ENCODE measurements at regions of chr6 and their contacts with region 1.

Region 1: DNA sequence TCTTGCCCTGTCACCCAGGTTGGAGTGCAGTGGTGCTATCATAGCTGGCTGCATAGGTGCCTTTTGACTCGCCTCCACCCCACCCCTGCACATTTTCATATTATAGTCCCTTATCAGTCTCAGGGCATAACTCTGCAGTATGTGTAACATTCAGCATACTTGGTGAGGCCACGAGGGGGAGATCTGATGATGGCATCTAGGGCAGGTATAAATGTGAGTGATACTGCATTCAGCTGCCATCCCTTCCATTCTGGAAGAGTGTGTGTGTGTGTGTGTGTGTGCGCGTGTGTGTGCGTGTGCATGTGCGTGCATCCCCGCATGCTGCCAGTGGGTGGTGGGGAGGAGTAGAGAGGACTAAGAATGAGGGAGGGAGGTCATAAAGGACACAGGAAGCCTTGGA is 81.4 kb downstream of the JARID2 start:
- DNase-seq: peak in 4 of 5 donors; percentile 13 to 45 (median 20)
- H3K4me3 ChIP-seq: no peak overlapping the region
- H3K4me3 Mint-ChIP-seq: peak overlapping the region in 4 of 8 donors; percentile 0 to 68 (median 46)
- H3K27ac ChIP-seq: no peak overlapping the region
- H3K27ac Mint-ChIP-seq: peak overlapping the region in 4 of 7 donors; percentile 64 to 82 (median 74)
- H3K4me1 ChIP-seq: peaks cover 62% of the 10 kb centered on the region
- H3K4me1 Mint-ChIP-seq: peaks cover 61 to 86% (median 76%) of the 10 kb centered on the region in 4 donors
- H3K27me3 ChIP-seq: no peaks in the 10 kb centered on the region
- H3K27me3 Mint-ChIP-seq: no peaks in the 10 kb centered on the region

Region 2: GRCh38 chr6:13624871-13625288 is 1702.4 kb before region 1 on chr6:
- CTCF ChIA-PET with region 1: no interaction called
- POLR2A ChIA-PET with region 1: no interaction called
- intact Hi-C with region 1: no loop called
- DNase-seq: peak in 4 of 5 donors; percentile 30 to 45 (median 39)
- H3K4me3 ChIP-seq: no peak overlapping the region
- H3K4me3 Mint-ChIP-seq: no peak overlapping the region
- H3K27ac ChIP-seq: no peak overlapping the region
- H3K27ac Mint-ChIP-seq: peak overlapping the region; percentile 54 to 93 (median 67)
- H3K4me1 ChIP-seq: no peaks in the 10 kb centered on the region
- H3K4me1 Mint-ChIP-seq: peaks cover 4 to 17% (median 9%) of the 10 kb centered on the region in 4 donors
- H3K27me3 ChIP-seq: no peaks in the 10 kb centered on the region
- H3K27me3 Mint-ChIP-seq: no peaks in the 10 kb centered on the region

Region 3: GRCh38 chr6:15343490-15344191 is 16.4 kb after region 1 on chr6:
- CTCF ChIA-PET with region 1: no interaction called
- POLR2A ChIA-PET with region 1: no interaction called
- intact Hi-C with region 1: no loop called
- DNase-seq: no peak
- H3K4me3 ChIP-seq: no peak overlapping the region
- H3K4me3 Mint-ChIP-seq: peak overlapping the region in 5 of 8 donors; percentile 8 to 42 (median 27)
- H3K27ac ChIP-seq: no peak overlapping the region
- H3K27ac Mint-ChIP-seq: peak overlapping the region in 1 of 7 donors; percentile 43
- H3K4me1 ChIP-seq: peaks cover 61% of the 10 kb centered on the region
- H3K4me1 Mint-ChIP-seq: peaks cover 55 to 85% (median 68%) of the 10 kb centered on the region in 4 donors
- H3K27me3 ChIP-seq: no peaks in the 10 kb centered on the region
- H3K27me3 Mint-ChIP-seq: no peaks in the 10 kb centered on the region

Region 4: GRCh38 chr6:15365273-15365687 is 38.0 kb after region 1 on chr6:
- CTCF ChIA-PET with region 1: no interaction called
- POLR2A ChIA-PET with region 1: no interaction called
- intact Hi-C with region 1: loop called (anchors 5 kb)
- DNase-seq: peak in 4 of 5 donors; percentile 20 to 45 (median 36)
- H3K4me3 ChIP-seq: no peak overlapping the region
- H3K4me3 Mint-ChIP-seq: peak overlapping the region in 7 of 8 donors; percentile 18 to 72 (median 54)
- H3K27ac ChIP-seq: no peak overlapping the region
- H3K27ac Mint-ChIP-seq: peak overlapping the region in 2 of 7 donors; percentile 55 to 65
- H3K4me1 ChIP-seq: peaks cover 60% of the 10 kb centered on the region
- H3K4me1 Mint-ChIP-seq: peaks cover 31 to 48% (median 42%) of the 10 kb centered on the region in 4 donors
- H3K27me3 ChIP-seq: no peaks in the 10 kb centered on the region
- H3K27me3 Mint-ChIP-seq: no peaks in the 10 kb centered on the region

Region 5: DNA sequence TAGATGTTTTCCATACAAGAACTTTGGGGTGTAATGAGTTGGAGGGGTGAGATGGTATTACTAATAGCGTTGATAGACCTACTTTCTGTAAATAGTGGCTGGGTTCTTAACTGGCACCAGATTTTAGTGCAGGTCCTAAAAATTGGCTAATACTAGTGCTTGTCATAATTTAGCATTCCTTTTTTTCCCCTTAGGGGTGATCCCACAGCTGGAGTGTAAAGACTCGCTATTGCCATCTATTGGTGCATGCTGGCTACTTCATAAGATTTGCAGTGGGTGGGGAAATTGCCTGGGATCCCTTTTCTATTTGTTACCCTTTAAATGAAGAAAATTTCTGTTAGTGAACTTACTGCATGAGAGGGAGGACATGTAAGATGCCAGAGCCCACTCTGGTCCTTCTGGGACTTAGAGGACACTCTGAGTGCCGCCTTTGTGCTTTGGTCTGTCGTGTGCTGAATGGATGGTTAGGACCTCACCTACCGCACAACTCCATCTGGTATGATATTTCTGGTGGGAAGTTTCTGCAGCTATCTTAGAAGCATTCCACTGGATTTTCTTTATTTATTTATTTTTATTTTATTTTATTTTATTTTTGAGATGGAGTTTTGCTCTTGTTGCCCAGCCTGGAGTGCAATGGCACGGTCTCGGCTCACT is 114.1 kb after region 1 on chr6:
- CTCF ChIA-PET with region 1: no interaction called
- POLR2A ChIA-PET with region 1: no interaction called
- intact Hi-C with region 1: loop called (anchors 1 kb)
- DNase-seq: peak in 4 of 5 donors; percentile 29 to 46 (median 37)
- H3K4me3 ChIP-seq: no peak overlapping the region
- H3K4me3 Mint-ChIP-seq: no peak overlapping the region
- H3K27ac ChIP-seq: no peak overlapping the region
- H3K27ac Mint-ChIP-seq: peak overlapping the region in 1 of 7 donors; percentile 3
- H3K4me1 ChIP-seq: peaks cover 43% of the 10 kb centered on the region
- H3K4me1 Mint-ChIP-seq: peaks cover 50 to 72% (median 58%) of the 10 kb centered on the region in 4 donors
- H3K27me3 ChIP-seq: no peaks in the 10 kb centered on the region
- H3K27me3 Mint-ChIP-seq: no peaks in the 10 kb centered on the region

Measured in CD4-positive, alpha-beta memory T cell (primary cell).